Activated B cell treated with CpG ODN at 0.5 μM for 24 hours (primary cell): ENCODE measurements at regions of chr11 and their contacts with region 1.

Region 1: GRCh38 chr11:61733120-61733978 is 19.1 kb upstream of the MYRF start:
- DNase-seq: peak; percentile 64
- ATAC-seq: peak; percentile 96
- H3K4me3 Mint-ChIP-seq: no peak overlapping the region
- H3K27ac Mint-ChIP-seq: no peak overlapping the region
- H3K4me1 Mint-ChIP-seq: peaks cover 4% of the 10 kb centered on the region
- H3K27me3 Mint-ChIP-seq: no peaks in the 10 kb centered on the region
- CTCF ChIP-seq: peak; percentile 44

Region 2: DNA sequence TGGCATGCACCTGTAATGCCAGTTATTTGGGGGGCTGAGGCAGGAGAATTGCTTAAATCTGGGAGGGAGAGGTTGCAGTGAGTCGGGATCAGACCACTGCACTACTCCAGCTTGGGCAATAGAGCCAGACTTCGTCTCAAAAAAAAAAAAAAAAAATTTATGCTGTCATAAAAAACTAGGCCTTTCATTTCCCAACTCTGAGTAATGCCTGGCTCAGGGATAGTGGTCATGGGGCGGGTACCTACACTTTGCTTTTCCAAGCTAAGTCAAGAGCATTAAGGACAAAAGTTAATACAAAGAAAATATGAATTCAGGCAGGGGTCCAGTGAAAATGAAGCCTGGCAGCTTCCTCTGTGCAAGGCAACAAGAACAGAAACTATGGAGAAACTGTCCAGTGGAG is 319.9 kb before region 1 on chr11:
- CTCF ChIA-PET with region 1: no interaction called
- POLR2A ChIA-PET with region 1: no interaction called
- intact Hi-C with region 1: no loop called
- DNase-seq: no peak
- ATAC-seq: no peak
- H3K4me3 Mint-ChIP-seq: no peak overlapping the region
- H3K27ac Mint-ChIP-seq: peak overlapping the region; percentile 27
- H3K4me1 Mint-ChIP-seq: peaks cover 10% of the 10 kb centered on the region
- H3K27me3 Mint-ChIP-seq: no peaks in the 10 kb centered on the region
- CTCF ChIP-seq: no peak

Region 3: DNA sequence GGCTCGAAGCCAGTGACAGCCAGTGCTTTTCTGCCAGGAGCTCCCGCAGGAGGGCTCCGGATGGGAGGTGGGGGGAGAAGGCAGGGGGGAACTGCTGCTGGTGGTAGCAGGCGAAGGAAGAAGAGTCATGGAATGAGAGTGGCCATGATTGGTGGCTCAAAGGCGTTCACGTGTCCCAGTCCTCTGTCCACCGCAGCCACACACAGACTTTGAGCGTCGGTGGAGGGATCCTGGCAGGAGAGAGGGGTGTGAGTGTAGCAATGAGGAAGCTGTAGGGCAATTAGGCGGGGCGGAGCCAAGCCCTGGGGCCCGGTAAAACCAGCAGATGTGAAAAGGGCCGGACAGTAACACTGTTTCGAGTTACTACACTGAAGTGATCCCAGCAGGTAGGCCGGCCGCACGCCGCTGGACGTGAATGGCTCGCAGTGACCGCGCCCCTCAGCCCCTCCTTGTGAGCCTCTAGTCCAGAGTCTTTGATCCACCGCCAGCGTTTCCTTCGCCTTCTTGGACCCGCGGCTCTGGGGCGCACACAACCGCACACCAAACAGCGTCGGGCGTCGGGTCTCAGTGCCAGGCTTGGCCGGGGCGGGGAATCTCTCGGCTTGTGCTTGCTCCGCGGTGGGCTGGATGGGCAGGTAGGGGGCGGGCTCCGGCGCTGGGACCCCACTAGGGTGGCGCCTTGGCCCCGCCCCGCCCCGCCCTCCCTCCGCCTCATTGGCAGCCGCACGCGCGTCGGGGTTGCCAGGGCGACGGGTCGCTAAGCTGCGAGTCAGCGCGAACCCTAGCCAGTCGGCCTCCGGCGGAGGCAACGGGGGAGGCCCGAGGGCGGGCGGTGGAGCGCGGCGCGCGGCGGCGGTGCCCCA is 225.2 kb before region 1 on chr11 and contains the start of gene LRRC10B:
- CTCF ChIA-PET with region 1: no interaction called
- POLR2A ChIA-PET with region 1: no interaction called
- intact Hi-C with region 1: no loop called
- DNase-seq: no peak
- ATAC-seq: peak; percentile 22
- H3K4me3 Mint-ChIP-seq: peak within 1 kb of the TSS; percentile 68
- H3K27ac Mint-ChIP-seq: no peak within 1 kb of the TSS
- H3K4me1 Mint-ChIP-seq: peaks cover 10% of the 10 kb centered on the region
- H3K27me3 Mint-ChIP-seq: peaks cover 44% of the 10 kb centered on the region
- CTCF ChIP-seq: no peak
- total RNA-seq, gene LRRC10B: not detected in 2 replicates

Region 4: DNA sequence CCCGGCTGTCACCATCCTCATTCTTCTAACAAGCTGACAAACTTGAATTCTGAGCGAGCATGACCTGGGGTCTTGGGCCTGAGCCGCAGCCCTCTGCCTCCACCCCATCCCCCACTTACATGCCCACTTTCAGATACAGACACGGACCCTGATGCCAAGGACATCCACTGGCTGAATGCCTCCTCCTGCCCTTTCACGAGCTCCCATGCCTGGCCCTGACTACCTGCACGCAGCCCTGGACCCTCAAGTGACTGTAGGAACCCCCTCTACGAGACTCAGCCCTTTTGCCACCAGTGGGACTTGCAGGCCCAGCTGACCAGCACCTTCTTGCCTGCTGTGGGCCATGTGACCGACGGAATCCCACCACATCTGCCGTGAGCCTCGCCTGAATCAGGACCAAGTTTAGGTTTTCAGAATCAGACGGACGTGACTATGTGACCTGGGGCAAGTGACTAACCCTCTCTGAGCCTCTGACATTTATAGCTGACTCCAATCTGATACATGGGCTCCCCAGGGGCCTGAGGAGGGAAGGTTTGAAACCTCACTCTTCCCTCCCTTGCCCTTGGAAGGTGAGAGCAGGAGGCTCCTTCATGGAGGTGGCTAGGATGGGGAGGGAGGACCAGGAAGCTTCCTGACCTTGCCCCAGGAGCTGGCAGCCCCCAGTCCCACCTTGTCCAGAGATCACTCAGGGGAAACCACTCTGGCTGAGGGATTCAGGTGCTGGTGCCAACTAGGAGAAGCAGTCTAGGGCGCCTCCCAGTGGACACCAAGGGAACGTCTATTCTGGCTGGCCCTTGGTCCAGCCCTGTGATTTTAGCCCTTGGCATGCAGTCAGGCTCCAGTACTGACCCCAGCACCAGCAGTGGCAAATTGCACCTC is 105.5 kb before region 1 on chr11:
- CTCF ChIA-PET with region 1: no interaction called
- POLR2A ChIA-PET with region 1: no interaction called
- intact Hi-C with region 1: loop called (anchors 10 kb)
- DNase-seq: no peak
- ATAC-seq: no peak
- H3K4me3 Mint-ChIP-seq: no peak overlapping the region
- H3K27ac Mint-ChIP-seq: no peak overlapping the region
- H3K4me1 Mint-ChIP-seq: no peaks in the 10 kb centered on the region
- H3K27me3 Mint-ChIP-seq: peaks cover 10% of the 10 kb centered on the region
- CTCF ChIP-seq: no peak

Region 5: GRCh38 chr11:61679893-61680621 is 53.3 kb before region 1 on chr11 and contains the start of gene DAGLA:
- CTCF ChIA-PET with region 1: interaction called, 3 read pairs
- POLR2A ChIA-PET with region 1: no interaction called
- intact Hi-C with region 1: loop called (anchors 2 kb)
- DNase-seq: peak; percentile 70
- ATAC-seq: peak; percentile 91
- H3K4me3 Mint-ChIP-seq: peak within 1 kb of the TSS; percentile 21
- H3K27ac Mint-ChIP-seq: no peak within 1 kb of the TSS
- H3K4me1 Mint-ChIP-seq: peaks cover 3% of the 10 kb centered on the region
- H3K27me3 Mint-ChIP-seq: peaks cover 33% of the 10 kb centered on the region
- CTCF ChIP-seq: no peak
- total RNA-seq, gene DAGLA: not detected in 2 replicates